Panc1 (cell line): ENCODE measurements at regions of chr12 and their contacts with region 1.

Region 1: DNA sequence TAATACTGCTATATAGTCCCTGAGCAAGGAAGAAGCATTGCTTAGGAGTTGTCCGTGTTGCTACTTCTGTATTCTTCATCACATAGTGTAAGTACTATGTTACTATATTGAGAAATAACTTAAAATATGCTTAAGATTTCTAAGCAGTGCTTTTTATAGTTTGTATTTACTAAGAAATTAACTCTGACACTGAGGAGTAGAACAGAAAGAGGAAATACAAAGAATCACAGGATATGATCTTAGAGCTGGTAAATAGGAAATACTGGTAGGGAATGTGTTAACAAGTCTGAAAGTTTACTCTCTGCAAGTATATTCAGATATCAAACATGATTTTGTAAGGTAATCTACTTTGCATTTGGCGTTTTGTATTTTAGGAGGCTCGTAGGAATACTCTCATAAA is 15.5 kb downstream of the XPOT start:
- DNase-seq: no peak
- ATAC-seq: no peak
- H3K4me3 ChIP-seq: no peak overlapping the region
- H3K27ac ChIP-seq: no peak overlapping the region
- H3K4me1 ChIP-seq: no peaks in the 10 kb centered on the region
- H3K27me3 ChIP-seq: no peaks in the 10 kb centered on the region
- CTCF ChIP-seq: no peak

Region 2: DNA sequence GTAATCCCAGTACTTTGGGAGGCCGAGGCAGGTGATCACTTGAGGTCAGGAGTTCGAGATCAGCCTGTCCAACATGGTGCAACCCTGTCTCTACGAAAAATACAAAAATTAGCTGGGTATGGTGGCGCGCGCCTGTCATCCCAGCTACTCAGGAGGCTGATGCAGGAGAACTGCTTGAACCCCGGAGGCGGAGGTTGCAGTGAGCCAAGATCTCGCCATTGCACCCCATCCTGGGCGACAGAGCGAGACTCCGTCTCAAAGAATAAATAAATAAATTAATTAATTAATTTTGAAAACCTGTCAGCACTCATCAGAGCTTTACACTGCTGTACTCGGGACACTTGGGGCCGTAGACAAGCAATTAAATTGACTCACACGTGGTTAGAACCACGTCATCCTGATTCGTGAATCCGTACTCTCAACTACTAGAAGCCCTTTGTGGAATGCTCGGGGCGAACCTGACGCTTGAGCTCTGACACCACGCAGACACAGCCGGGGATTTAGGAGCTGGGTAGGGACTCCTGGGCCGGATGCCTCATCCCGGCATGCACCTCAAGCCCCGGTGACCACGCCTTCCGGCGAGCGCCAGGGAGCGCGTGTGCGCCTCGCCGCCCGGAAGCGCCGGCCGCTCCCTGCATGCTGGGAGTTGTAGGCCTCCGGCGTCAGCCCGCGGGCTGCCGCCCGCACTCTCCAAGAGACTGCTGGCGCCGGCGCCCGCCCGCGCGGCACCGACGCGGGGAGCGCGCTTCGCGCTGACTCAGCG is 15.8 kb before region 1 on chr12 and contains the start of gene XPOT:
- CTCF ChIA-PET with region 1: no interaction called
- POLR2A ChIA-PET with region 1: interaction called, 12 read pairs
- in situ Hi-C with region 1: no loop called
- intact Hi-C with region 1: no loop called
- DNase-seq: peak; percentile 82
- ATAC-seq: peak; percentile 97
- H3K4me3 ChIP-seq: peak within 1 kb of the TSS; percentile 89 to 97
- H3K27ac ChIP-seq: peak within 1 kb of the TSS; percentile 98
- H3K4me1 ChIP-seq: peaks cover 7% of the 10 kb centered on the region; the same call in 1 of the 2 replicates
- H3K27me3 ChIP-seq: no peaks in the 10 kb centered on the region
- CTCF ChIP-seq: no peak
- total RNA-seq, gene XPOT: 155 TPM

Region 3: GRCh38 chr12:64469455-64470142 is 49.9 kb after region 1 on chr12:
- CTCF ChIA-PET with region 1: no interaction called
- POLR2A ChIA-PET with region 1: no interaction called
- in situ Hi-C with region 1: no loop called
- intact Hi-C with region 1: no loop called
- DNase-seq: no peak
- ATAC-seq: no peak
- H3K4me3 ChIP-seq: no peak overlapping the region
- H3K27ac ChIP-seq: no peak overlapping the region
- H3K4me1 ChIP-seq: no peaks in the 10 kb centered on the region
- H3K27me3 ChIP-seq: no peaks in the 10 kb centered on the region
- CTCF ChIP-seq: no peak

Region 4: DNA sequence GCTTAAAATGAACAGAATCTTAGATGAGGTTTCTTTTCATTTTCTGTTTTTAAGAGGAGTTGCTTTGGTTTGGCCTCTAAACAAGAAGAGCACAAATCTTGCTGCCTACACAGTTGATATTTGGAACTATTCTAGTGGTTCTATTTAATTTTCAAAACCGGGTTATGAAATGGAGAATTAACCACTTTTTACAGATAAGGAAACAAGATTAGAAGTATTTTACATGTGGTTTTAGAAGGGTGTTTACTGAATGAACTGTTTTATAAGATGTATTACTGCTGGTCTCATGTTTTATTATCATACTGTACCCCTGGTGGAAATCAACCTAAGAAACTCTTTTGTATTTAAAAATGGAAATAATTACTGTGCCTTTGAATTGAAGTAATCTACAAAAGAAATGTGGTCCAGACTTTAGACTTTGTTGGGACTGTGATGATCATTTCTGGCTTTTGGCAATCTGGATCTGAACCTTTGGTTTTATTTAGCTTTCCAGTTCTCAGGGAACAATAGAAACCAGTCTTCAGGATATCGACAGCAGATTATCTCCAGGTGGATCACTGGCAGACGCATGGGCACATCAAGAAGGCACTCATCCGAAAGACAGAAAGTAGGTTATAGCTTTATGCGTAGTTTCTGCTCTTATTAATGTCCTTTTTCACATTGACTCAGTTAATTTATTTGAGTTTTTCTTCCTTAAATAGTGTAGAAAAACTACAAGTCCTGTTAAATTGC is 75.5 kb after region 1 on chr12:
- CTCF ChIA-PET with region 1: no interaction called
- POLR2A ChIA-PET with region 1: no interaction called
- in situ Hi-C with region 1: no loop called
- intact Hi-C with region 1: loop called (anchors 10 kb)
- DNase-seq: no peak
- ATAC-seq: no peak
- H3K4me3 ChIP-seq: no peak overlapping the region
- H3K27ac ChIP-seq: no peak overlapping the region
- H3K4me1 ChIP-seq: no peaks in the 10 kb centered on the region
- H3K27me3 ChIP-seq: no peaks in the 10 kb centered on the region
- CTCF ChIP-seq: no peak

Region 5: GRCh38 chr12:64531665-64532335 is 112.1 kb after region 1 on chr12:
- CTCF ChIA-PET with region 1: no interaction called
- POLR2A ChIA-PET with region 1: no interaction called
- in situ Hi-C with region 1: no loop called
- intact Hi-C with region 1: no loop called
- DNase-seq: no peak
- ATAC-seq: no peak
- H3K4me3 ChIP-seq: no peak overlapping the region
- H3K27ac ChIP-seq: no peak overlapping the region
- H3K4me1 ChIP-seq: no peaks in the 10 kb centered on the region
- H3K27me3 ChIP-seq: no peaks in the 10 kb centered on the region
- CTCF ChIP-seq: no peak

Region 6: GRCh38 chr12:64583771-64584421 is 164.2 kb after region 1 on chr12:
- CTCF ChIA-PET with region 1: no interaction called
- POLR2A ChIA-PET with region 1: interaction called, 15 read pairs
- in situ Hi-C with region 1: no loop called
- intact Hi-C with region 1: no loop called
- DNase-seq: no peak
- ATAC-seq: no peak
- H3K4me3 ChIP-seq: no peak overlapping the region
- H3K27ac ChIP-seq: no peak overlapping the region
- H3K4me1 ChIP-seq: no peaks in the 10 kb centered on the region; the same call in 1 of the 2 replicates
- H3K27me3 ChIP-seq: no peaks in the 10 kb centered on the region
- CTCF ChIP-seq: no peak